ENCODE measurements at regions of chr2 and their contacts with region 1.

Region 1: GRCh38 chr2:65064728-65065552 is 8.7 kb downstream of the CEP68 start:
- DNase-seq: peak; percentile 62
- H3K4me3 Mint-ChIP-seq: no peak overlapping the region
- H3K27ac Mint-ChIP-seq: peak overlapping the region; percentile 76
- H3K4me1 Mint-ChIP-seq: peaks cover 35% of the 10 kb centered on the region
- H3K27me3 Mint-ChIP-seq: no peaks in the 10 kb centered on the region

Region 2: DNA sequence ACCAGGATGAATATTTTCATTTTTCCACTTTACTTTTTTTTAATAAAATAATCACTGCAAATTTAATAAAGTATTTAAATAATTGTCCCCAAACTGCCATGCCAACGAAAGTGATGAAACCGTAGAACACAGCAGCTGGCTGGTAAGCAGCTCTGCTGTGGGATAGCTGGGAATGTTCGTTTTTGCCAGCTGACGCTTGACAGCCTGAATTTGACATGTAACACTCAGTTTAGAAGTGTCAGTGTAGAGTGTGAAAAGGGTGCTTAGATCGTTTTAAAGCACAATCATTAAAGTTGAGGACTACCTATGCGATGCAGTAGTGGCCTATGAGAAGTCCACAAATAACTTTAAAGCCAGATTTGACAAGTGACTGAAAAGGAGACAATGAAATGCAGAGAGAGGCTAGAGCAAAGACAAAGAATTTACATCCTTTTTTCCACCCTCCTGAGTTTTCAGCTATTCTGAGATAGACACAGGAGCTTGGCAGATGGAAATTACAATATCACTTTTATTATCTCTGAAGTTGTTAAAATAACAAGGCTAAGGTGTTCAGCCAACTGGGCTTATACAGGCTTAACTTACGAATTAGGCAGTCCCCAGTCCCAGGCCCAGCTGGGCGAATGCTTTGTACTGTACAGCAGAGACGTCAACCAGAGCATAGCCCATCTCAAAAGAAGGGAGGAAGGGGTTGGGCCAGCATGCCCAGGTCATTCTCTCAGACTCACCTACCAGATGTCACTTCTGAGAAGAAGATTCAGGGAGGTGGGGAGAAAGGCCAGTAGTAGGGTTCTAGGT is 107.6 kb before region 1 on chr2:
- CTCF ChIA-PET with region 1: no interaction called
- POLR2A ChIA-PET with region 1: no interaction called
- DNase-seq: no peak
- H3K4me3 Mint-ChIP-seq: no peak overlapping the region
- H3K27ac Mint-ChIP-seq: no peak overlapping the region
- H3K4me1 Mint-ChIP-seq: no peaks in the 10 kb centered on the region
- H3K27me3 Mint-ChIP-seq: peaks cover 2% of the 10 kb centered on the region

Region 3: GRCh38 chr2:65129826-65130663 is 65.1 kb after region 1 on chr2 and contains the start of gene RAB1A:
- CTCF ChIA-PET with region 1: interaction called, 38 read pairs
- POLR2A ChIA-PET with region 1: interaction called, 13 read pairs
- DNase-seq: peak; percentile 99
- H3K4me3 Mint-ChIP-seq: peak within 1 kb of the TSS; percentile 99
- H3K27ac Mint-ChIP-seq: peak within 1 kb of the TSS; percentile 98
- H3K4me1 Mint-ChIP-seq: peaks cover 39% of the 10 kb centered on the region
- H3K27me3 Mint-ChIP-seq: peaks cover 9% of the 10 kb centered on the region
- total RNA-seq, gene RAB1A: 74.0 to 74.9 TPM

Region 4: GRCh38 chr2:65169760-65170136 is 104.8 kb after region 1 on chr2:
- CTCF ChIA-PET with region 1: interaction called, 82 read pairs
- POLR2A ChIA-PET with region 1: interaction called, 7 read pairs
- DNase-seq: no peak
- H3K4me3 Mint-ChIP-seq: no peak overlapping the region
- H3K27ac Mint-ChIP-seq: no peak overlapping the region
- H3K4me1 Mint-ChIP-seq: no peaks in the 10 kb centered on the region
- H3K27me3 Mint-ChIP-seq: peaks cover 2% of the 10 kb centered on the region

Region 5: GRCh38 chr2:65193446-65193845 is 128.5 kb after region 1 on chr2:
- CTCF ChIA-PET with region 1: interaction called, 40 read pairs
- POLR2A ChIA-PET with region 1: interaction called, 4 read pairs
- DNase-seq: no peak
- H3K4me3 Mint-ChIP-seq: no peak overlapping the region
- H3K27ac Mint-ChIP-seq: no peak overlapping the region
- H3K4me1 Mint-ChIP-seq: no peaks in the 10 kb centered on the region
- H3K27me3 Mint-ChIP-seq: peaks cover 18% of the 10 kb centered on the region

Region 6: GRCh38 chr2:65366595-65367125 is 301.7 kb after region 1 on chr2:
- CTCF ChIA-PET with region 1: no interaction called
- POLR2A ChIA-PET with region 1: no interaction called
- DNase-seq: peak; percentile 41
- H3K4me3 Mint-ChIP-seq: no peak overlapping the region
- H3K27ac Mint-ChIP-seq: no peak overlapping the region
- H3K4me1 Mint-ChIP-seq: peaks cover 35% of the 10 kb centered on the region
- H3K27me3 Mint-ChIP-seq: peaks cover 2% of the 10 kb centered on the region

Region 7: DNA sequence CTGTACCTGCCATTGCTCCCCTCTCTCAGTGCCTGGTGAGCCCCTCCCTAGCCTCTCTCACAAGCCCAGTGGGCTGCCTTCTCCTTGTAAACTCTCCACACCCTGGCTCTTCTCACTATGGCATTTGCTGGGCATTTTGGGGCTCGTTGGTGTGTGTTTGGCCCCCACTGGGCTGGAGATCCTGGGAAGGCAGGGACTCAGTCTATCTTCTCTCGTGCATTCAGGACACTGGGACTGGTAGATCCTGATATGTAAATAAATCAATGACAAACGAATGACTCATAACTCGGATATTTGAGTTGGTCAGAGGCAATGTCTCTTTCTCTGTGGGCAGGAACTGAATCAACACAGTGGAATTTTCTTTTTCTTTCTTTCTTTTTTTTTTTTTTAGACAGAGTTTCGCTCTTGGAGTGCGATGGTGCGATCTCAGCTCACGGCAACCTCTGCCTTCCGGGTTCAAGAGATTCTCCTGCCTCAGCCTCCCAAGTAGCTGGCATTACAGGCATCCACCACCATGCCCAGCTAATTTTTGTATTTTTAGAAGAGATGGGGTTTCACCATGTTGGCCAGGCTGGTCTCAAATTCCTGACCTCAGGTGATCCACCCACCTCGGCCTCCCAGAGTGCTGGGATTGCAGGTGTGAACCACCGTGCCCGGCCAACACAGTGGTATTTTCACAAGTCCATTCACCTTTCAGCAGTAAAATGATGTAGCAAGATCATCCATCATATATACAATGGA is 512.1 kb after region 1 on chr2:
- CTCF ChIA-PET with region 1: interaction called, 14 read pairs
- POLR2A ChIA-PET with region 1: no interaction called
- DNase-seq: no peak
- H3K4me3 Mint-ChIP-seq: no peak overlapping the region
- H3K27ac Mint-ChIP-seq: no peak overlapping the region
- H3K4me1 Mint-ChIP-seq: peaks cover 4% of the 10 kb centered on the region
- H3K27me3 Mint-ChIP-seq: peaks cover 33% of the 10 kb centered on the region

Measured in activated CD4-positive, alpha-beta memory T cell treated with anti-CD3 and anti-CD28 coated beads, Interleukin-2, amount 10 ng/mL, durations not matched to agents 7 days and 5 days (primary cell).